ENCODE measurements at regions of chr16 and their contacts with region 1.

Region 1: DNA sequence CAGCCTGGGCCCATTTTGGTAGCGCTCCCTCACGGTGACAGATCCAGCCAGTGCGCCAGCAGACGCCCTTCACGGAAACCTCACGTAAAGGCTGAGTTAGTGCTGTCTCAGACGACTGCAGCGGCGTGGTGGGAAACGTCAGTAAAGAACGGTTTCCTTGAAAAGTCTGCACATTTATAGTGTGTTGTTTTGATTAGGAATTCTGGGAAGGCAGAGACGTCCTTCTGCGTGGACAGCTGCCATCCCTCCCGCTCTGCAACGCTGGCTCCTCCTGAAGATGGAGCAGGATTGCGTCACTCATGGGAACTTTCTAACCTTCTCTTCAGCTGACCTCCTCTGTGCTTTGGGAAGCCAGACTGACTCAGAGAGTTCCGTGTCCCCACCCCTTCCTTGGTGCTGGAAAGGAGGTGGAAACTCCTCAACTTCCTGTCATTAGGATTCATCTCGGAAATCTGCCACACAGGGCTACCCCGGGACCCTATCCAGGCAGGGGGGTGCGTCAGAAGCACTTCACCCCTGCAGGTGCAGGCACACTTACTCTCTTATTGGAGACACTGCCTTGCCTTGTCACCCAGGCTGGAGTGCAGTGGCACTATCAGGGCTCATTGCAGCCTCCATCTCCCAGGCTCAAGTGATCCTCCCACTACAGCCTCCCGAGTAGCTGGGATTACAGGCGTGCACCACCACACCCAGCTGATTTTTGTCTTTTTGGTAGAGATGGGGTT is 24.3 kb upstream of the CRISPLD2 start:
- DNase-seq: peak in 1 of 2 donors; percentile 28
- H3K4me3 ChIP-seq: peak overlapping the region in 1 of 3 donors; percentile 26
- H3K27ac ChIP-seq: peak overlapping the region; percentile 41 to 81
- H3K4me1 ChIP-seq: no peaks in the 10 kb centered on the region
- H3K27me3 ChIP-seq: no peaks in the 10 kb centered on the region
- CTCF ChIP-seq: no peak
- POLR2A ChIP-seq: no peak

Region 2: DNA sequence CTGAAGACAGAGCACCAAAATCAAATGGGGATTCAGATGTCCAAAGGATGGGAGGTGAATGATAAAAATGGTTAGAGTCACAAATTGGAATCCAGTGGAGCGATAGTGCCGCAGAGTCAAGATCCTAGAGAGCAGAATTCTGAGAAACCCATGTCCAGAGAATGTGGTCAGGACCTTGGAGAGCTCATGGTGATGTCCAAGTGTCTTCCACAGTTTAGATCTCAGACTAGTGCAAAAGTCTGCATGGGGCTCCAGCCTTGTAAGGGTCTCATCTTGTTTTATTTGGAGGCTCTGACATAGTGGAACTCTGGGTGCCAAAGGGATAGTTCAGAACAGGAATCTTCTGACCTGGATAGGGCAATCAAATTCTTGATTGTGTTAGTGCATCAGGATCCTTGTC is 1233.6 kb before region 1 on chr16:
- intact Hi-C with region 1: no loop called
- DNase-seq: no peak
- H3K4me3 ChIP-seq: no peak overlapping the region
- H3K27ac ChIP-seq: no peak overlapping the region
- H3K4me1 ChIP-seq: no peaks in the 10 kb centered on the region
- H3K27me3 ChIP-seq: no peaks in the 10 kb centered on the region
- CTCF ChIP-seq: no peak
- POLR2A ChIP-seq: no peak

Region 3: GRCh38 chr16:84730406-84731037 is 65.0 kb before region 1 on chr16:
- intact Hi-C with region 1: no loop called
- DNase-seq: peak in 1 of 2 donors; percentile 76
- H3K4me3 ChIP-seq: no peak overlapping the region
- H3K27ac ChIP-seq: peak overlapping the region in 1 of 2 donors; percentile 67
- H3K4me1 ChIP-seq: peaks cover 0 to 23% of the 10 kb centered on the region in 2 donors
- H3K27me3 ChIP-seq: no peaks in the 10 kb centered on the region
- CTCF ChIP-seq: no peak
- POLR2A ChIP-seq: no peak

Region 4: DNA sequence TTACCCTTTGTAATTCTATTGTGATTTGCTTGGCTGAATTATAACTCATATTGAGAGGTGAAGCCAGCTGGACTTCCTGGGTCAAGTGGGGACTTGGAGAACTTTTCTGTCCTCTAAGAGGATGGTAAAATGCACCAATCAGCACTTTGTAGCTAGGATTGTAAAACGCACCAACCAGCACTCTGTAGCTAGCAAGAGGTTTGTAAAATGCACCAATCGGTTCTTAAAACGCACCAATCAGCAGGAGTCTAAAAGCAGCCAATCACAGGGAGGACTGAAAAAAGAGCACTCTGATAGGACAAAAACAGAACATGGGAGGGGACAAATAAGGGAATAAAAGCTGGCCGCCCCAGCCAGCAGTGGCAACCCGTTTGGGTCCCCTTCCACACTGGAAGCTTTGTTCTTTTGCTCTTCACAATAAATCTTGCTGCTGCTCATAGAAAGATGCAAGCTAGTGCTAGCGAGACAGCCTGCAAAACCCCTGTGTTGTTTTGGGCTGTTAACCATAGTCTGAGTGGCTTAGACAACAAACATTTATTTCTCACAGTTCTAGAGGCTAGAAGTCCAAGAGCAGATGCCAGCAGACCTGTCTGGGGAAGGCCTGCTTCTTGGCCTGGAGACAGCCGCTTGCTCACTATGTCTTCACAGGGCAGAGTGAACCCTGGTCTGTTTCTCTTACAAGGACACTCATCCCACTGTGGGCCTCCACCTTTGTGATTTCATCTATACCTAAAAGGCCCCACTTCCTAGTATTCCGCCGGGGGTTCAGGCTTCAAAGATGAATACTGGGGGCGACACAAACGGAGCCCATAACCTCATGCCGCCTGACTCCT is 14.7 kb before region 1 on chr16:
- intact Hi-C with region 1: no loop called
- DNase-seq: no peak
- H3K4me3 ChIP-seq: no peak overlapping the region
- H3K27ac ChIP-seq: no peak overlapping the region
- H3K4me1 ChIP-seq: peaks cover 0 to under 1% of the 10 kb centered on the region in 2 donors
- H3K27me3 ChIP-seq: no peaks in the 10 kb centered on the region
- CTCF ChIP-seq: no peak
- POLR2A ChIP-seq: no peak

Region 5: GRCh38 chr16:85812031-85812793 is 1016.7 kb after region 1 on chr16:
- intact Hi-C with region 1: loop called (anchors 5 kb)
- DNase-seq: peak in 1 of 2 donors; percentile 44
- H3K4me3 ChIP-seq: peak overlapping the region in 1 of 3 donors; percentile 15
- H3K27ac ChIP-seq: no peak overlapping the region
- H3K4me1 ChIP-seq: no peaks in the 10 kb centered on the region
- H3K27me3 ChIP-seq: peaks cover 0 to 5% of the 10 kb centered on the region in 2 donors
- CTCF ChIP-seq: no peak
- POLR2A ChIP-seq: no peak

Measured in breast epithelium (tissue), 4 donors.